HCT116 (cell line): ENCODE measurements at regions of chr15 and their contacts with region 1.

Region 1: GRCh38 chr15:75809986-75810750 is 33.1 kb upstream of the UBE2Q2 start:
- DNase-seq: peak; percentile 45
- ATAC-seq: peak; percentile 97
- H3K4me3 ChIP-seq: no peak overlapping the region
- H3K27ac ChIP-seq: no peak overlapping the region
- H3K4me1 ChIP-seq: peaks cover 0 to 7% of the 10 kb centered on the region in 2 experiments; a peak in 2 of 4 replicates
- H3K27me3 ChIP-seq: no peaks in the 10 kb centered on the region
- CTCF ChIP-seq: peak; percentile 69 to 78 (median 72)
- POLR2A ChIP-seq: no peak
- RAD21 ChIP-seq: peak; percentile 91

Region 2: GRCh38 chr15:75921729-75922703 is 111.8 kb after region 1 on chr15:
- CTCF ChIA-PET with region 1: interaction called, 38 read pairs
- POLR2A ChIA-PET with region 1: no interaction called
- RAD21 ChIA-PET with region 1: interaction called, 4 to 13 read pairs
- intact Hi-C with region 1: loop called (anchors 1 kb)
- DNase-seq: peak; percentile 48
- ATAC-seq: peak; percentile 93
- H3K4me3 ChIP-seq: no peak overlapping the region
- H3K27ac ChIP-seq: no peak overlapping the region
- H3K4me1 ChIP-seq: no peaks in the 10 kb centered on the region
- H3K27me3 ChIP-seq: no peaks in the 10 kb centered on the region
- CTCF ChIP-seq: peak; percentile 51 to 74 (median 68); a peak in 4 of 6 replicates
- POLR2A ChIP-seq: no peak
- RAD21 ChIP-seq: peak; percentile 78

Region 3: DNA sequence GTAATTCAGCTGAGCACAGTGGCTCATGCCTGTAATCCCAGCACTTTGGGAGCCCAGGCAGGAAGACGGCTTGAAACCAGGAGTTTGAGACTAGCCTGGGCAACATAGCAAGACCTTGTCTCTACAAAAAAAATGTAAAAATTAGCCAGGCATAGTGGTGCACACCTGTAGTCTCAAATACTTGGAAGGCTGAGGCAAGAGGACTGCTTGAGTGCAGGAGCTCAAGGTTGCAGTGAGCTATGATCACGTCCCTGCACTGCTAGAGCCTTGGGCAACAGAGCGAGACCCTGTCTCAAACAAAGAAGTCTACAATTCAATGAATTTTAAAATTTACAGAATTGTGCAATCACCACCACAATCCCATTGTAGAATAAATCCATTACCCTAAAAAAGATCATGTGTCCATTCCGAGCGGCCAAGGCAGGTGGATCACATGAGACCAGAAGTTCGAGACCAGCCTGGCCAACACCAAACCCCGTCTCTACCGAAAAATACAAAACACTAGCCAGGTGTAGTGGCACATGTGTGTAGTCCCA is 138.7 kb after region 1 on chr15:
- CTCF ChIA-PET with region 1: no interaction called
- POLR2A ChIA-PET with region 1: no interaction called
- RAD21 ChIA-PET with region 1: no interaction called
- intact Hi-C with region 1: no loop called
- DNase-seq: no peak
- ATAC-seq: no peak
- H3K4me3 ChIP-seq: no peak overlapping the region
- H3K27ac ChIP-seq: no peak overlapping the region
- H3K4me1 ChIP-seq: no peaks in the 10 kb centered on the region
- H3K27me3 ChIP-seq: no peaks in the 10 kb centered on the region
- CTCF ChIP-seq: no peak
- POLR2A ChIP-seq: no peak
- RAD21 ChIP-seq: no peak

Region 4: GRCh38 chr15:75966073-75966472 is 155.9 kb after region 1 on chr15:
- CTCF ChIA-PET with region 1: no interaction called
- POLR2A ChIA-PET with region 1: no interaction called
- RAD21 ChIA-PET with region 1: no interaction called
- intact Hi-C with region 1: no loop called
- DNase-seq: no peak
- ATAC-seq: no peak
- H3K4me3 ChIP-seq: no peak overlapping the region
- H3K27ac ChIP-seq: no peak overlapping the region
- H3K4me1 ChIP-seq: no peaks in the 10 kb centered on the region
- H3K27me3 ChIP-seq: no peaks in the 10 kb centered on the region
- CTCF ChIP-seq: no peak
- POLR2A ChIP-seq: no peak
- RAD21 ChIP-seq: no peak

Region 5: DNA sequence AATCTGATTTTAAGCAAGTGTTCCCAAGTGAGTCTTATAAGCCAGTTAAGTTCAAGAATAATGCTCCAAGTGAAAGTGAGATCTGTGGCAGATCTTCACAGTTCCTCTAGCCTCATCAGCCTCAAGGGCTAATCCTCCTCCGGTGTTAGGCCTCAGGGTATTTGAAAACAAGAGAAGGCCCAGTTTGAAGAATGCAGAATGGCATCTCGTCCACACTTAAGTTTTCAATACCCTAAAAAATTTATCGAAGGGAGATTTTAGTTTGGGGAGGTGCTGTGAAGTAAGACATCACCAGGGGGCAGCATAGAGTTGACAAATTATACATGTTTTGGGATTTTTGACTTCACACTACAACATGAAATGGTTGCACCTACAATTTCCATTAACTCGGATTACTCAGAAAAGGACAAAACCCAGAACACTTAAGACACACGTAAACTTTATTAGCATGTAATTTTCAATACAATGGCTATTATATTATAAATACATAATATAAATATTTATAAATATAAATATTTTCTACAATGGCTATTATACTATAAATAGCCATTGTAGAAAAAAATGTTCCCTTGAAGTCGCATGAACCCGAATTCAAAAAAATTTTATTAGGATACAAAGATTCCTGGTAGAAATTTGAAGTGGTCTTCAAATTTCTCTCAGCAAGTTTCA is 247.3 kb after region 1 on chr15:
- CTCF ChIA-PET with region 1: interaction called, 6 read pairs
- POLR2A ChIA-PET with region 1: no interaction called
- RAD21 ChIA-PET with region 1: no interaction called
- intact Hi-C with region 1: loop called (anchors 10 kb)
- DNase-seq: no peak
- ATAC-seq: peak; percentile 37; the same call in 1 of the 2 replicates
- H3K4me3 ChIP-seq: peak overlapping the region; percentile 29 to 54
- H3K27ac ChIP-seq: no peak overlapping the region
- H3K4me1 ChIP-seq: peaks cover 9 to 30% of the 10 kb centered on the region in 2 experiments
- H3K27me3 ChIP-seq: peaks cover 13% of the 10 kb centered on the region
- CTCF ChIP-seq: peak; percentile 69 to 75 (median 73)
- POLR2A ChIP-seq: no peak
- RAD21 ChIP-seq: peak; percentile 61

Region 6: DNA sequence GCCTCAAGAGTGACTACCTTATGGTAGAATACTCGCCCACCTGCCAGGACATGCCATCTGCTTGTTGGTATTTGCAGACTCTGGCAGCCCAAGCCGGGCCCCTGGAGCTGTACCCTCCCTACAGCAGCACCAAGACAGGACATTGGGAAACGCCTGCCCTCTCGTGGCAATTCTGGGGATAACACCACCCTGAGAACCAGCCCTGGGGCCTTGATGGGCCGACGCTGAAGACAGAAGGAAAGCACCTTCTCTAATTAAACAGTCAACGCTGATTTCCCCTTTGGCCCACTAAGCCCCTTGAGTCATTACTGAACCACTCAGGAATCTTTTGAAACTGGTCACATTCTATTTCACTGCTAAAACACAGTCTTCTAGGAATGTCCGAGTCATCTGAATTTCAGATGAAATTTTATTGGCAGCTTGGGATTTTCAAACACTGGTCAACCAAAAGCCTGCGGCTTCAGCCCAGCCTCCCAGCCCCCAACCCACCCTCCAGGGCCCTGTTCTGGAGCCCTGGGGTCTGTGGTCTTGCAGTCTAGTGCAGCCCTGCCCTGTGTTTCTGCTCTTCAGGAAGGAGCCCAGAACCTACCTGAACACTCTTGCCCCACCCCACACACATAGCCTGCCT is 340.9 kb after region 1 on chr15:
- CTCF ChIA-PET with region 1: interaction called, 13 read pairs
- POLR2A ChIA-PET with region 1: no interaction called
- RAD21 ChIA-PET with region 1: no interaction called
- intact Hi-C with region 1: loop called (anchors 1 kb)
- DNase-seq: peak; percentile 42
- ATAC-seq: peak; percentile 92
- H3K4me3 ChIP-seq: no peak overlapping the region
- H3K27ac ChIP-seq: no peak overlapping the region
- H3K4me1 ChIP-seq: peaks cover 0 to 18% of the 10 kb centered on the region in 2 experiments; a peak in 2 of 4 replicates
- H3K27me3 ChIP-seq: no peaks in the 10 kb centered on the region
- CTCF ChIP-seq: peak; percentile 70 to 90 (median 84)
- POLR2A ChIP-seq: no peak
- RAD21 ChIP-seq: peak; percentile 74